ENCODE measurements at regions of chr7 and their contacts with region 1.

Region 1: GRCh38 chr7:143248761-143249354 is 14.4 kb upstream of the GSTK1 start:
- DNase-seq: no peak
- H3K4me3 ChIP-seq: no peak overlapping the region
- H3K4me3 Mint-ChIP-seq: peak overlapping the region in 7 of 8 donors; percentile 25 to 67 (median 47)
- H3K27ac ChIP-seq: no peak overlapping the region
- H3K27ac Mint-ChIP-seq: peak overlapping the region; percentile 24 to 90 (median 70)
- H3K4me1 ChIP-seq: peaks cover 93% of the 10 kb centered on the region
- H3K4me1 Mint-ChIP-seq: peaks cover 73 to 98% (median 84%) of the 10 kb centered on the region in 4 donors
- H3K27me3 ChIP-seq: no peaks in the 10 kb centered on the region
- H3K27me3 Mint-ChIP-seq: no peaks in the 10 kb centered on the region

Region 2: DNA sequence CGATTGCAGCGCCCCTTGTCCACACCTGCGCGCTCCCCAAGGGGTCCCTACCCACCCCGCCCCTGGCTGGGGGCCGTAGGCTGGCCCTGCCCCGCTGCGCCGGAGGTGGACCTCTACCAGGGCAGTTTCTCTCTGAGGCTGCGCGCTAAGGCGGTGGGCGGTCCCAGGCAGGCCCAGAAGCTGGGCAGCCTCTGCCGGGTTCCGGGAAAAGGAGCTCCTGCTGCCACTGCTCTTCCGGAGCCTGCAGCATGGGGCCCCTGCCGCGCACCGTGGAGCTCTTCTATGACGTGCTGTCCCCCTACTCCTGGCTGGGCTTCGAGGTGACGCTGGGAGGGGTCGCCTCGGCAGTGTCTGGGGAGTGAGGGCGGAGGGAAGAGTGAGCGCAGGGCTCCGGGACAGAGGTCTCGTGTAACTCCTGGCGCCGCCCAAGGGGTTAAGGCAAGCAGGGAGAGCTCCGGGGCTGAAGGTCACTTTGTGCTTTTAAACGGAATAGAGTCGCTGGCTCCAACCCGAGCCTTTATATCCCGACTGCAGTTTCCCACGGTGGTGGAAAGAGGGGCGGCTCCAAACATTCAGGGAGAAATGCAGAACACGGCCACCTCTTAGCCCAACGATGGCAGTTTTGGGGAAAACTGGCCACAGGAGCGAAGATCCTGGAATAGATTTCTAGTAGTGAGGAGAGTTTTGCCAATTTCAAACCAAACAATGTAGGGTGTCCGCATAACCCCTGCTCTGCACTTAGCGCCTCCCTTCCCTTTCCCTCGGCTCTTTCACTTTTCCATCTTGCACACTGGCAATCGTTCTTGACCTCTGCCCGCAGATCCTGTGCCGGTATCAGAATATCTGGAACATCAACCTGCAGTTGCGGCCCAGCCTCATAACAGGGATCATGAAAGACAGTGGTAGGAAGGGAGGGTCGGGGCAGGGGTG is 14.7 kb after region 1 on chr7 and contains the start of gene GSTK1:
- CTCF ChIA-PET with region 1: interaction called, 252 read pairs
- POLR2A ChIA-PET with region 1: interaction called, 163 read pairs
- intact Hi-C with region 1: loop called (anchors 1 kb)
- DNase-seq: peak; percentile 69 to 86 (median 75)
- H3K4me3 ChIP-seq: peak within 1 kb of the TSS; percentile 89 to 90
- H3K4me3 Mint-ChIP-seq: peak within 1 kb of the TSS; percentile 93 to 99 (median 96)
- H3K27ac ChIP-seq: peak within 1 kb of the TSS; percentile 89
- H3K27ac Mint-ChIP-seq: peak within 1 kb of the TSS; percentile 91 to 98 (median 94)
- H3K4me1 ChIP-seq: peaks cover 72% of the 10 kb centered on the region
- H3K4me1 Mint-ChIP-seq: peaks cover 40 to 81% (median 62%) of the 10 kb centered on the region in 4 donors
- H3K27me3 ChIP-seq: no peaks in the 10 kb centered on the region
- H3K27me3 Mint-ChIP-seq: no peaks in the 10 kb centered on the region
- total RNA-seq, gene GSTK1: 469 to 482 TPM

Region 3: DNA sequence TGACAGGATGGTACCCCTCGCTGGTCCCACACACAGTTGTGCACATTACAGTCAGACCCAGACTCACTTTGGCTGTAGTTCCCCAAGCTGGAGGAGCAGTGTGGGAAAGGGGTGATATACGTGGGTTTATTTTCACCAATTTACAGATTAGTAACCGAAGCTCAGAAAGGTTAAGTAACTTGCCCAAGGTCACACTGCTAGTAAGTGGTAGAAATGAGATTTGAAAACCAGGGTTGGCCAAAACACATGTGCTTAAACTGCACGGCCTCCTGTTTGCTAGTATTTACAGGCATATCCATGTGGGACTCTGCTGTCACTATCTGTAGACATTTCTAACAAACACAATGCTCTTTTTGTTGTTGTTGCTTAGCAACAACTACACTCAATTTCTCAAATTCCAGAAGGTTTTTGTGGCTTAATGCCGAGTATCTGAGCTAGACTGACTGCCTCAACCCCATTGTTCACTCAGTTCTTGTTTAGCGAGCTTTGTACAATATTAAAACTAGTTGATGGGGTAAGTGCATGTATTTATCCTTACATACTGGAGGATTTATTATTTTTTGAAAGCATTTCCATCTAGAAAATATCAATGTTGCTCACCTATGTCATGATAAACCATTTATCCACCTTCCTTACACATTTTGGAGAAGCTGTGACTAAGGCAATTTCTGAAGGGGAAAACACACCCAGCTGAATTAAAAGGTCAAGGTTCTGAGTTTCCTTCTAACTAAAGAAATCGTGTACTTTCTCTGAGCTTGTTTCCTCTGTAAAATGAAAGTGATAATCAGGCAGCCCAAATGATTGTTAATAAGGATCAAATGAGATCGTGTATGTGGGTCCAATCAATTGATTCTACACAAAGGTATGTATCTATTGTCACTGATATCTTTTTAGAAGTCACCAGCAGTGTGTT is 30.6 kb after region 1 on chr7:
- CTCF ChIA-PET with region 1: interaction called, 82 read pairs
- POLR2A ChIA-PET with region 1: interaction called, 16 read pairs
- intact Hi-C with region 1: no loop called
- DNase-seq: peak; percentile 52 to 74 (median 60)
- H3K4me3 ChIP-seq: peak overlapping the region; percentile 1 to 48
- H3K4me3 Mint-ChIP-seq: peak overlapping the region; percentile 61 to 89 (median 81)
- H3K27ac ChIP-seq: peak overlapping the region; percentile 74
- H3K27ac Mint-ChIP-seq: peak overlapping the region; percentile 83 to 97 (median 94)
- H3K4me1 ChIP-seq: peaks cover 33% of the 10 kb centered on the region
- H3K4me1 Mint-ChIP-seq: peaks cover 34 to 40% (median 37%) of the 10 kb centered on the region in 4 donors
- H3K27me3 ChIP-seq: no peaks in the 10 kb centered on the region
- H3K27me3 Mint-ChIP-seq: no peaks in the 10 kb centered on the region

Region 4: GRCh38 chr7:143287935-143288826 is 39.3 kb after region 1 on chr7 and contains the start of gene CASP2:
- CTCF ChIA-PET with region 1: interaction called, 513 read pairs
- POLR2A ChIA-PET with region 1: interaction called, 17 read pairs
- intact Hi-C with region 1: loop called (anchors 2 kb)
- DNase-seq: peak; percentile 99 to 100 (median 99)
- H3K4me3 ChIP-seq: peak within 1 kb of the TSS; percentile 82 to 92
- H3K4me3 Mint-ChIP-seq: peak within 1 kb of the TSS; percentile 92 to 99 (median 96)
- H3K27ac ChIP-seq: peak within 1 kb of the TSS; percentile 78
- H3K27ac Mint-ChIP-seq: peak within 1 kb of the TSS; percentile 83 to 98 (median 95)
- H3K4me1 ChIP-seq: peaks cover 44% of the 10 kb centered on the region
- H3K4me1 Mint-ChIP-seq: peaks cover 39 to 75% (median 57%) of the 10 kb centered on the region in 4 donors
- H3K27me3 ChIP-seq: no peaks in the 10 kb centered on the region
- H3K27me3 Mint-ChIP-seq: no peaks in the 10 kb centered on the region
- total RNA-seq, gene CASP2: 94.3 to 96.1 TPM

Region 5: DNA sequence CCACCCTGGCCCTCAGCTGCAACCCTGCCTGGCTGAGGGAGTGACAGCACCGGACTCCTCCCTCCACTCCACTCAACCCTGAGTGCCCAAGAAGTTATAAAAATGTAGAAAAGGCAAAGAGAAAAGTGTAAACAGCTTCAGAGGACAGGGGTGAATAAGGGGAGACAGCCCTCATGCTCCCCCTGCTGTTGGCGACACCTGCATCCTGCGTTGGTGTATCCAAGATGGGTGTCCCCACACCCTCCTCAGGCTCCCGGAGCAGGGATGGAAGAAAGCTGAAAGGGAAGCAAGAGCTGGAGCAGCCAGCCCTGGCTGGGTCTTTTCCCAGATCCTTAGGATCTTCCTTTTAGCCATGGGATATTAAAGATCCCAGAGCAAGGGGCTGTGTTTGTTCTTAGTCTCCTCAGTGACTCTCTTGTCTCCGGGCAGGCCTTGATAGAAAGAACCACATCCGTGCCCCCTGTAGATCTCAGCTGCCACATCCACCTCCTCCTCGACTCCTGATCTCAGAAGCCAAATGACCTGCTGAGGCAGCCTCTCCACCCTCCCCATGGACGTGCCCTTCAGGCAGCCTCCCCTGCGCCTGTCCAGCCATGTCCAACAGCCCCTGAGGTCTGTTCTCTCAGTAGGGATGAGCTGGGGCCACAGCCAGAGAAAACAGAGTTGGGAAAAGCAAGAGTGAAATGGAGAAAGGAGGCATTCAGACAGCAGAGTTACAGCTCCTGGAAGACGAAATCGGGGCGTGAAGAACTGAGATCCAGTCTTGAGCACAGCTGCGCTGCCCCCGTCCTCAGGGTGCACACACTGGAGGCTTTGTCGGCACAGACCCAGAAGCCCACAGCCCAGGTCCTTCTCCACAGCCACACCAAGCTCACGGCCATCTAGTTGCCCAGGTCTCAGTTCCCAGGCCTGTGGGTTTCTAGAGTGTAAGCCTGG is 106.9 kb after region 1 on chr7:
- CTCF ChIA-PET with region 1: no interaction called
- POLR2A ChIA-PET with region 1: no interaction called
- intact Hi-C with region 1: no loop called
- DNase-seq: no peak
- H3K4me3 ChIP-seq: no peak overlapping the region
- H3K4me3 Mint-ChIP-seq: no peak overlapping the region
- H3K27ac ChIP-seq: no peak overlapping the region
- H3K27ac Mint-ChIP-seq: peak overlapping the region in 1 of 7 donors; percentile 44
- H3K4me1 ChIP-seq: no peaks in the 10 kb centered on the region
- H3K4me1 Mint-ChIP-seq: peaks cover 3 to 5% (median 4%) of the 10 kb centered on the region in 4 donors
- H3K27me3 ChIP-seq: no peaks in the 10 kb centered on the region
- H3K27me3 Mint-ChIP-seq: peaks cover 0 to 2% of the 10 kb centered on the region in 2 donors

Measured in CD4-positive, alpha-beta memory T cell (primary cell).